Stomach (tissue), 19 donors: ENCODE measurements at regions of chr9 and their contacts with region 1.

Region 1: GRCh38 chr9:34376596-34377403 is at the start of gene MYORG:
- DNase-seq: peak; percentile 98
- H3K4me3 ChIP-seq: peak within 1 kb of the TSS; percentile 73 to 83 (median 80)
- H3K27ac ChIP-seq: peak within 1 kb of the TSS; percentile 85 to 93 (median 90)
- H3K4me1 ChIP-seq: peaks cover 48 to 73% (median 63%) of the 10 kb centered on the region in 4 donors
- H3K27me3 ChIP-seq: peaks cover 0 to 5% (median 0%) of the 10 kb centered on the region in 3 donors
- CTCF ChIP-seq: no peak
- EP300 ChIP-seq: no peak
- POLR2A ChIP-seq: peak in 2 of 4 donors; percentile 74 to 78
- total RNA-seq, gene MYORG: 9.5 to 31.3 (median 19.6) TPM

Region 2: GRCh38 chr9:34185778-34186551 is 190.8 kb before region 1 on chr9:
- intact Hi-C with region 1: loop called (anchors 10 kb)
- DNase-seq: peak; percentile 57 to 86
- H3K4me3 ChIP-seq: no peak overlapping the region
- H3K27ac ChIP-seq: peak overlapping the region; percentile 55 to 86 (median 82)
- H3K4me1 ChIP-seq: peaks cover 27 to 90% (median 50%) of the 10 kb centered on the region in 4 donors
- H3K27me3 ChIP-seq: no peaks in the 10 kb centered on the region
- CTCF ChIP-seq: no peak
- EP300 ChIP-seq: no peak
- POLR2A ChIP-seq: no peak

Region 3: DNA sequence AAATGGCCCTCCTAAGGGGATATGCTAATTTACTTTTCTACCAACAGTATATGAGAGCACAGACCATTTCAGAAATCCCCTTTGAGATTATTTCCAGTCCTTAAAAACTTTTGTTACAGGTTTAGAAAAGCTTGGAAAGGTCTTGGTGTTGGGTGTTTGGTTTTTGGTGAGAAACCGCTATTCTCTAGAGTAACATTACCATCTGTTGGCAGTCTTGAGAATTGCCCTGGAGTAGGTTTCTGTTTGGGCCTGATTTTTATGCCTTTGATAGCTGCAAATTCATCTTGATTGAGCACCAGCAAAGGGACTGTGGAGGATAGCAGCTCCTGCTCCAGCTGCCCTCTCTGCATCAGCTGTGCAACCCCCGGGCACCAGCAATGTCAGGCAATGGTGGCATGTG is 39.4 kb before region 1 on chr9:
- intact Hi-C with region 1: loop called (anchors 5 kb)
- DNase-seq: no peak
- H3K4me3 ChIP-seq: no peak overlapping the region
- H3K27ac ChIP-seq: no peak overlapping the region
- H3K4me1 ChIP-seq: peaks cover 10 to 61% (median 30%) of the 10 kb centered on the region in 4 donors
- H3K27me3 ChIP-seq: no peaks in the 10 kb centered on the region
- CTCF ChIP-seq: no peak
- EP300 ChIP-seq: no peak
- POLR2A ChIP-seq: no peak

Region 4: DNA sequence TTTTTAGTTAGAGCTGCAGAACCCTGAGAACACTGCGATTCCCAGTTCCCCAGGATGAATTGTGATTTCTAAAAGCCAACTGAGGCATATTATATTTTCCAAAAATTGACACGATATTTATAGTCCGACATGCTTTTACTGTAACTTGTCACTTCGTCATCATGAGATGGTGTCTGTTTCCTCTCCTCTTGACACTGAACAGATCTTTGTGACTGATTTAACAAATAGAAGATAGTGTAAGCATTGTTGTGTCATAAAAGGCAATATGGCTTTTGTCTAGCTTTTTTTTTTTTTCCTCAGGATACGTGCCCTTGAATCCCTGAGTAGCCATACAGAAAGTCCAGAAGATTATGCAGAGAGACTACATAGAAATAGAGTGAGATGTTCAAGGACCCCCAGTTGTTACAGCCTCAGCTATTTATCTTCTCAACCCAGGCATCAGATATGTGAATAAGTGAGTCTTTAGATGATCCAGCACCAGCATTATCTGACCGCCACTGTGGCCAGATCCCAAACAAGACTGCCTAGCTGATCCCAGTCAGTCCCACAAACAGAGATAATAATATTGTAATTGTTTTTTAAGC is 361.0 kb after region 1 on chr9:
- intact Hi-C with region 1: no loop called
- DNase-seq: peak in 1 of 2 donors; percentile 29
- H3K4me3 ChIP-seq: no peak overlapping the region
- H3K27ac ChIP-seq: no peak overlapping the region
- H3K4me1 ChIP-seq: peaks cover 0 to 5% (median 0%) of the 10 kb centered on the region in 4 donors
- H3K27me3 ChIP-seq: no peaks in the 10 kb centered on the region
- CTCF ChIP-seq: no peak
- EP300 ChIP-seq: no peak
- POLR2A ChIP-seq: no peak